Mammary epithelial cell (primary cell): ENCODE measurements at regions of chr17 and their contacts with region 1.

Region 1: GRCh38 chr17:33154869-33155455 is 138.1 kb downstream of the ASIC2 start:
- DNase-seq: no peak
- H3K4me3 ChIP-seq: no peak overlapping the region
- H3K27ac ChIP-seq: no peak overlapping the region
- H3K4me1 ChIP-seq: no peaks in the 10 kb centered on the region
- H3K27me3 ChIP-seq: no peaks in the 10 kb centered on the region
- CTCF ChIP-seq: no peak

Region 2: DNA sequence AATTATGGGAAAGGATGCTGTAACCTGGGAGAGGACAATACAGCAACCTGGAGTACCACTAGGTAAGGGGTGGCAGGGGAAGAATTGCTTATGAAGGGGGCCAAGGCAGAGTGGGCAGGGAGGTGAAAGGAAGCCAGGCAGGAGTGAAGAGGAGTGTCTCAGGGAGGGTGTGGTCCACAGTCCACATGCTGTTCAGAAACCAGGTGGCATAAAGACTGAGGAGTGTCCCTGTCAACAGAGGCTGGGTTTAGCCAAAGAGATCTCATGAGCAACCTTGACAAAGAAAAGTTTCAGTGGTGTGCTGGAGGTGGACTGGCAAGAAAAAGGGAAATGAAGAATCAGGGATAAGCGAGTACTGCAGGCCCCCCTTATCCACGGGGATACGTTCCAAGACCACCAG is 74.9 kb before region 1 on chr17:
- CTCF ChIA-PET with region 1: no interaction called
- dilution Hi-C with region 1: loop called (anchors 5 kb)
- in situ Hi-C with region 1: no loop called
- intact Hi-C with region 1: no loop called
- DNase-seq: no peak
- H3K4me3 ChIP-seq: no peak overlapping the region
- H3K27ac ChIP-seq: no peak overlapping the region
- H3K4me1 ChIP-seq: no peaks in the 10 kb centered on the region
- H3K27me3 ChIP-seq: no peaks in the 10 kb centered on the region
- CTCF ChIP-seq: no peak

Region 3: GRCh38 chr17:33209671-33210070 is 54.7 kb after region 1 on chr17:
- CTCF ChIA-PET with region 1: no interaction called
- dilution Hi-C with region 1: no loop called
- in situ Hi-C with region 1: no loop called
- intact Hi-C with region 1: no loop called
- DNase-seq: no peak
- H3K4me3 ChIP-seq: no peak overlapping the region
- H3K27ac ChIP-seq: no peak overlapping the region
- H3K4me1 ChIP-seq: no peaks in the 10 kb centered on the region
- H3K27me3 ChIP-seq: no peaks in the 10 kb centered on the region
- CTCF ChIP-seq: no peak

Region 4: DNA sequence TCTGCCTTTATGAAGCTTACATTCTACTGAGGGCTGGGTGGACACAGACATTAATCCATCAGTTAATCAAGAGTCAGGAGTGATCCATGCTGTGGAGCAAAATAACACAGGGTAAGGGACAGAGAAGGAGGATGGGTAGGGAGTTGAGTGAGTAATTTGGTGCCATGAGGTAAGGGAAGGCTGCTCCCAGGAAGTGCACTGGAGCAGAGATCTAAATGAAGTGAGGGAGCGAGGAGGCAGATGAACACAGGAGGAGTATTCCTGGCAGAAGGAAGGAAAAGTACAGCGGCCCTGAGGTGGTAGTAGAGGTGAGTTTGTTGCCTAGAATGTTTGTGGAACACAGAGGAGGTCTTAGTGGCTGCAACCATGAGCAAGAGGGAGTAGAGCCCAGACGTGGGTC is 103.3 kb after region 1 on chr17:
- CTCF ChIA-PET with region 1: no interaction called
- dilution Hi-C with region 1: no loop called
- in situ Hi-C with region 1: no loop called
- intact Hi-C with region 1: no loop called
- DNase-seq: no peak
- H3K4me3 ChIP-seq: no peak overlapping the region
- H3K27ac ChIP-seq: no peak overlapping the region
- H3K4me1 ChIP-seq: peaks cover 2% of the 10 kb centered on the region
- H3K27me3 ChIP-seq: no peaks in the 10 kb centered on the region
- CTCF ChIP-seq: no peak